ENCODE measurements at regions of chr20 and their contacts with region 1.

Region 1: GRCh38 chr20:49484180-49485140 is 2.0 kb upstream of the KCNB1 start:
- DNase-seq: peak in 1 of 2 donors; percentile 83
- H3K4me3 ChIP-seq: peak overlapping the region; percentile 56 to 60
- H3K27ac ChIP-seq: no peak overlapping the region
- H3K4me1 ChIP-seq: peaks cover 7 to 19% of the 10 kb centered on the region in 2 donors
- H3K27me3 ChIP-seq: no peaks in the 10 kb centered on the region
- CTCF ChIP-seq: peak; percentile 68 to 85 (median 85)

Region 2: DNA sequence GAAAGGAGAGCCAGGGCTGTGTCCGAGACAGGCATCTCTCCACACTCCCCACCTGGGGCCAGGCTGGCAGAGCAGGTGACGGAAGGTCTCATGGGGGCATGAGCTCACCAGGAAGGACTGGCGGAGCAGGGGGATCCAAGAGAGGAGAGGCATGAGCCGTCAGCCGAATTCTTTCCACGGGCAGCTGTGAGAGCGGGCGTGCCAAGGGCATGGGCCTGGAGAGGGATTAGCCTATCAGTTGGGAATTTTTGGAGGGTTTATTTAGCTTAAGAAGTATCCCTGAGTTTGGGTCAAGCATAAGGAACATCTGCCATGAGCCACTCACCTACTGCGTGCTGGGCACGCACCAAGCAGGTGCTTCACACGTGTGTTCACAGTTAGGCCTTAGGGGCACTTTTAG is 146.4 kb before region 1 on chr20:
- intact Hi-C with region 1: loop called (anchors 1 kb)
- DNase-seq: no peak
- H3K4me3 ChIP-seq: no peak overlapping the region
- H3K27ac ChIP-seq: no peak overlapping the region
- H3K4me1 ChIP-seq: peaks cover 0 to 3% of the 10 kb centered on the region in 2 donors
- H3K27me3 ChIP-seq: no peaks in the 10 kb centered on the region
- CTCF ChIP-seq: no peak

Region 3: GRCh38 chr20:49384437-49385088 is 99.9 kb before region 1 on chr20:
- intact Hi-C with region 1: loop called (anchors 2 kb)
- DNase-seq: peak in 1 of 2 donors; percentile 68
- H3K4me3 ChIP-seq: no peak overlapping the region
- H3K27ac ChIP-seq: no peak overlapping the region
- H3K4me1 ChIP-seq: peaks cover 0 to 8% of the 10 kb centered on the region in 2 donors
- H3K27me3 ChIP-seq: no peaks in the 10 kb centered on the region
- CTCF ChIP-seq: peak; percentile 41 to 63 (median 55)

Region 4: GRCh38 chr20:49445176-49445575 is 39.3 kb before region 1 on chr20:
- intact Hi-C with region 1: loop called (anchors 2 kb)
- DNase-seq: no peak
- H3K4me3 ChIP-seq: no peak overlapping the region
- H3K27ac ChIP-seq: peak overlapping the region; percentile 1 to 16
- H3K4me1 ChIP-seq: peaks cover 18 to 28% of the 10 kb centered on the region in 2 donors
- H3K27me3 ChIP-seq: no peaks in the 10 kb centered on the region
- CTCF ChIP-seq: no peak

Region 5: GRCh38 chr20:49508435-49509199 is 24.2 kb after region 1 on chr20:
- intact Hi-C with region 1: loop called (anchors 2 kb)
- DNase-seq: no peak
- H3K4me3 ChIP-seq: no peak overlapping the region
- H3K27ac ChIP-seq: peak overlapping the region; percentile 62 to 70
- H3K4me1 ChIP-seq: peaks cover 12 to 57% of the 10 kb centered on the region in 2 donors
- H3K27me3 ChIP-seq: no peaks in the 10 kb centered on the region
- CTCF ChIP-seq: peak; percentile 51 to 59 (median 52)

Region 6: DNA sequence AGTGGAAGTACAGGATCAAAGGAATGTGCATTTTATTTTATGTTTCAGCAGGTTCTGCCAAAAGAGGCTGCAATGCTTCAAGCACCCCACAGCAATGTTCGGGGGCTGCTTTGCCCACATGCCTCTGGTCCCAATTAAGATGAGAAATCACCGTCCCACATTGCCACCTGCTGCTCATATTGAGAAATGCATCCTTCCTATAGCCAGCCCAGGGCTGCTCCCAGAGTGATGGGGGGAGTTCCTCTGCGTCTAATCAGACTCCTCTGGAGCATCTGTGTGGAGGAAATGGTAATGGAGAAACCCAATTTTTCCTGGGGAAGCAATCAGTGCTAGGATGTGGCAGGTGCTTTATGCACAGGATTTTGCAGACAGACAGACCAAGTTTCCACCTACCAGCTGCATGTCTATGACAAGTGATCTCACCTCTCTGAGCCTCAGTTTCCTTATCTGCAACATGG is 49.8 kb after region 1 on chr20:
- intact Hi-C with region 1: loop called (anchors 1 kb)
- DNase-seq: no peak
- H3K4me3 ChIP-seq: no peak overlapping the region
- H3K27ac ChIP-seq: peak overlapping the region in 1 of 2 donors; percentile 0
- H3K4me1 ChIP-seq: no peaks in the 10 kb centered on the region
- H3K27me3 ChIP-seq: no peaks in the 10 kb centered on the region
- CTCF ChIP-seq: peak; percentile 81 to 90 (median 81)